ENCODE measurements at regions of chr10 and their contacts with region 1.

Region 1: GRCh38 chr10:649798-650440 is 39.5 kb downstream of the DIP2C start:
- DNase-seq: peak; percentile 93
- ATAC-seq: peak; percentile 87
- H3K4me3 ChIP-seq: peak overlapping the region; percentile 53 to 75 (median 66)
- H3K27ac ChIP-seq: peak overlapping the region; percentile 83
- H3K4me1 ChIP-seq: peaks cover 30% of the 10 kb centered on the region
- H3K27me3 ChIP-seq: no peaks in the 10 kb centered on the region
- CTCF ChIP-seq: no peak
- EP300 ChIP-seq: peak in 1 of 2 experiments; percentile 25; a peak in 1 of 4 replicates
- POLR2A ChIP-seq: peak; percentile 64 to 85
- RAD21 ChIP-seq: no peak

Region 2: GRCh38 chr10:596725-597345 is 53.1 kb before region 1 on chr10:
- CTCF ChIA-PET with region 1: no interaction called
- POLR2A ChIA-PET with region 1: no interaction called
- in situ Hi-C with region 1: no loop called
- intact Hi-C with region 1: loop called (anchors 1 kb)
- DNase-seq: no peak
- ATAC-seq: no peak
- H3K4me3 ChIP-seq: no peak overlapping the region
- H3K27ac ChIP-seq: no peak overlapping the region
- H3K4me1 ChIP-seq: no peaks in the 10 kb centered on the region
- H3K27me3 ChIP-seq: no peaks in the 10 kb centered on the region
- CTCF ChIP-seq: no peak
- EP300 ChIP-seq: no peak
- POLR2A ChIP-seq: no peak
- RAD21 ChIP-seq: no peak

Region 3: DNA sequence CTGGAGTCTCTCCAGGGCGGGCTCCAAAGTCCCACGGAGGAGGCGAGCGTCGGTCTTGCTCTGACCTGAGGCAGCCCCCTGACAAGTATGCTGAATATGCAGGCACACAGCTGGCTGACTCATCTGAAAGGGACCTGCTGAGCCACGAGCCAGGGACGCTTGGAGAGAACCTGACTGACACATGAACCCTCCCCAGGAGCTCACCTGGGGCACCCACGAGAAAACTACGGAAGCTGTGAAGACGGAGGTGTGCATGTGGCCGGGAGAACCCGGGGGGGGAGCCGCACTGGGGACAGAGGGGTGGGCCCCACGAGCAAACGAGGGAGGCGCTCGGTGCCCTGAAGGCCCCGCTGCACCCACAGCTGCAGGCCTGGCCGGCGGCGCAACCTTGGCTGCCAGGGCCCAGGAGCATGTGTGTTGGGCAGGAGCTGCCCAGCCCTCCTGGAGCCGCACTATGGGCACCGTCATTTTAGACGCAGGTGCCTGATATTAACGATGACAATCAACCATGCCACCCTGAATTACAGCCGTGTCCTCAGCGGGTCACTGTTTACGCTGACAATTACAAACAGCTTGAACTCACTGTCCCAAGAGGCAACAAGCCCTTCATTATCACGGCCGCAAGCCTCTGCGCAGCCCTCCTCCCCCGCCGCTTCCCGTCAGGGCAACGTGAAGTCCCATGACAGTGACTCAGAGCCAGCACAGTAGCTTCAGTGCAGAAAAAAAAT is 25.1 kb before region 1 on chr10:
- CTCF ChIA-PET with region 1: no interaction called
- POLR2A ChIA-PET with region 1: interaction called, 14 read pairs
- in situ Hi-C with region 1: no loop called
- intact Hi-C with region 1: no loop called
- DNase-seq: peak; percentile 69
- ATAC-seq: peak; percentile 92
- H3K4me3 ChIP-seq: peak overlapping the region; percentile 38 to 64 (median 51); a peak in 5 of 6 replicates
- H3K27ac ChIP-seq: peak overlapping the region; percentile 37
- H3K4me1 ChIP-seq: peaks cover 24% of the 10 kb centered on the region
- H3K27me3 ChIP-seq: no peaks in the 10 kb centered on the region
- CTCF ChIP-seq: no peak
- EP300 ChIP-seq: no peak
- POLR2A ChIP-seq: 0 out of 4 replicates have a peak, but pooled peaks of 1 of the 2 experiments have one; percentile 23
- RAD21 ChIP-seq: no peak

Region 4: GRCh38 chr10:718152-718700 is 68.3 kb after region 1 on chr10:
- CTCF ChIA-PET with region 1: no interaction called
- POLR2A ChIA-PET with region 1: no interaction called
- in situ Hi-C with region 1: no loop called
- intact Hi-C with region 1: no loop called
- DNase-seq: peak; percentile 36
- ATAC-seq: no peak
- H3K4me3 ChIP-seq: no peak overlapping the region
- H3K27ac ChIP-seq: no peak overlapping the region
- H3K4me1 ChIP-seq: peaks cover 3% of the 10 kb centered on the region
- H3K27me3 ChIP-seq: peaks cover 0 to 16% of the 10 kb centered on the region in 2 experiments; a peak in 3 of 5 replicates
- CTCF ChIP-seq: no peak
- EP300 ChIP-seq: no peak
- POLR2A ChIP-seq: no peak
- RAD21 ChIP-seq: no peak

Region 5: DNA sequence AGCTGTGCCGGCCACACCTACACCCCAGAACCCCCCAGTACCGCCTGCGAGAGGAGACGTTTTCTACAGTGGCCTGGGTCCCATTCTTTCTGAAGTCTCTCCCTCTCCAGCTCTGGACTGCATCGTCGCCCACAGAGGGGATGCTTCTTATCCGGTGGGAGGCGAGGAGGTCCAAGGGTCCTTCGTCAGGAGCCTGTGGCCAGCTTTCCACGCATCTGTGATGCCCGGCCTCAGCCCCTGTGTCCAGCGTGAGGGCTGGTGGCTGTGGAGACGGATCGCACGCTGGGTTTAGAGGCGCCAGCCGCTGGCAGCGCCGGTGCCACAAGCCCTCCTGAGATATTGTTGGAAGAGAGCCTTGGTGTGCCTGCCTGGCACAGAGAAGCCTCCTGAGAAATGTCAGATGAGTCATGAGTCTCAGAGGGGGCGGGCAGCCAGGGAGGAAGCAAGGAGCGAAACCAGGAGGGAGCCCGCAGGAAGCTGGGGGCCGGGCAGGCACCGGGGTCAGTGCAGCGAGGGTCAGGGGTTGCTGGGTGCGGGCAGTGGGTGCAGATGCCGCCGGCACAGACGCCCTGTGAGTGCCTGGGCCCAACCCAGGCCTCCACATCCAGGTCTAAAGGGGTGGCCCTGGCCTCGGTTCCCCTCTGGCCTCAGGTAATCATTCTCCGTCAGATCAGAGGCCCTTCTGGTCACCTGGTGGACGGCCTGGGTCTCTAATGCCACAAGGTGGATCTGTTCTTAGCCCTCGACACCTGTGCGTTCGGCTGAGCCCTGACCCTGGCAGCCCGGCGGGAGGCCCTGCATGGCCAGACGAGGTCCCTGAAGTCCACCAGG is 125.5 kb after region 1 on chr10:
- CTCF ChIA-PET with region 1: no interaction called
- POLR2A ChIA-PET with region 1: no interaction called
- in situ Hi-C with region 1: no loop called
- intact Hi-C with region 1: no loop called
- DNase-seq: no peak
- ATAC-seq: peak; percentile 15; the same call in 2 of the 3 replicates
- H3K4me3 ChIP-seq: no peak overlapping the region
- H3K27ac ChIP-seq: no peak overlapping the region
- H3K4me1 ChIP-seq: no peaks in the 10 kb centered on the region
- H3K27me3 ChIP-seq: peaks cover 8 to 61% of the 10 kb centered on the region in 2 experiments; a peak in 4 of 5 replicates
- CTCF ChIP-seq: no peak
- EP300 ChIP-seq: no peak
- POLR2A ChIP-seq: no peak
- RAD21 ChIP-seq: no peak

Measured in HepG2 (cell line).